Psoas muscle (tissue), 8 donors: ENCODE measurements at regions of chr10 and their contacts with region 1.

Region 1: DNA sequence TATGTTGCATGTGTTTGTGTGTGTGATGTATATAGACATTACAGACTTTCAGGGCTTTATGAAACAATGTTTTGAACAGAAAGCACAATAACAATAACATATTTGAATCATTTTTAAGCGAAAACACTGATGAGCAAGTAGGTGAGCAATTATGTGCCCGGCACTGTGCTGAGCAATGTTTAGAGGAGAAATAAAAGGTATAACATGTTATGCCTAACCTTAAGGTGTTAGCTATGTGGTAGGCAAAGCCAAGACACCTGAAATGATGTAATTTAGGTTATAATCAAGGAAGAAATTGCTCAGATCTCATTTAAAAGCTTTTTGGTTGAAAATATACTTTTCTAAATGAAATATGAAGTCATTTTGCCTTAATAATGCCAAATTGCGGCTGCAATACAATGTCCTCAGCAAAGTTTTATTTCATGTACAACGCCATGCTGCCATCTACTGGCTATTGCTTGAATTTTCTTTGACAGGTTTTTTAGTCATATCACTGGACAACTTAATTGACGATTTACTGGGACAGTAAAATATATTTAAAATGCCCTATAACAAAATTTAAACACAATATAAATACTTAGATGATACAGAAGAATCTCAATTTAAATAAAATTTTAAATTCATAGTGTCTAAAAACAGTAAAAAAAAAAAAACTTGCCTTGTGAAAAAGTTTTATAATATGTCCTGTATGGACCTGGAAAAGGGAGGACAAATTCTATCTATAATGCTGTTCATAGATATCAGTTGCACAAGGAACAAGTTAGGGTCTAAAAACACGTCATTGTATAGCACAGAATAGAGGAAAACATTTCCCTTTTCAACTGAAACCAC is 131.1 kb upstream of the CDK1 start:
- DNase-seq: no peak
- ATAC-seq: peak in 3 of 4 donors; percentile 58 to 86 (median 67)
- H3K4me3 ChIP-seq: no peak overlapping the region
- H3K27ac ChIP-seq: no peak overlapping the region
- H3K4me1 ChIP-seq: no peaks in the 10 kb centered on the region
- H3K27me3 ChIP-seq: no peaks in the 10 kb centered on the region
- CTCF ChIP-seq: peak; percentile 82

Region 2: DNA sequence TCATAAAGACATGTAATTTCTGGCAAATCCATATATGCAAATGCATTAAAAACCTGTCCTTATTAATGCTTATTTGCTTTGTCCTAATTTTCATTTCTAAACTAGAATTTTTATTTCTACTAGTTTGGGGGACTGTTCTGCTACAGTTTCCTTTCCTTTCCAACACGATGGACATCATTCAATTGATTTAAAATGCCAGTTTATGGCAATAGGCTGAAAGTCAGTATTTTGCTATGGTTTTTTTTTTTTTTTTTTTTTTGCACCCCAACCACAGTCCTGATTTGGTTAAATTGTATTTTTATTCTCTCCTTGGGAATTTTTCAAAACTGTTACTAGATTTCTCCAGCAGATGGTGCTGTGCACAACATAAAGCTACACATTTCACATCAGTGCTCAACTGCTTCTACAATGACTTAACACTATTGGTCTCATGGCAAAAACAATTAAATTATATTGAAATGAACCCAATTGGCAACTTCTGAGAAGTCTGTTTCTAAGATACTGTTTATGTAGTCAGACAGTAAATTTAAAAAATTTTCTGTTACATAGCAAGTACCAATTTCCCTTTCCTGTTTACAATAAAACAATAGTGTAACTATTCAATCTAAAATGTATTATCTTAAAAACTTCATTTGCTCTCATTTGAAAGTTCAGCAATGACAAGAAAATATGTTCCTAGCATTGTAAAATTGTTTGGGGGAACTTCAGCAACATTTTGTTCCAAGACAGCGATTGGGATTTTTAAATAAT is 547.0 kb before region 1 on chr10:
- intact Hi-C with region 1: loop called (anchors 5 to 10 kb)
- DNase-seq: no peak
- ATAC-seq: peak; percentile 63 to 90 (median 76)
- H3K4me3 ChIP-seq: no peak overlapping the region
- H3K27ac ChIP-seq: peak overlapping the region; percentile 33
- H3K4me1 ChIP-seq: no peaks in the 10 kb centered on the region
- H3K27me3 ChIP-seq: no peaks in the 10 kb centered on the region
- CTCF ChIP-seq: peak; percentile 70

Region 3: DNA sequence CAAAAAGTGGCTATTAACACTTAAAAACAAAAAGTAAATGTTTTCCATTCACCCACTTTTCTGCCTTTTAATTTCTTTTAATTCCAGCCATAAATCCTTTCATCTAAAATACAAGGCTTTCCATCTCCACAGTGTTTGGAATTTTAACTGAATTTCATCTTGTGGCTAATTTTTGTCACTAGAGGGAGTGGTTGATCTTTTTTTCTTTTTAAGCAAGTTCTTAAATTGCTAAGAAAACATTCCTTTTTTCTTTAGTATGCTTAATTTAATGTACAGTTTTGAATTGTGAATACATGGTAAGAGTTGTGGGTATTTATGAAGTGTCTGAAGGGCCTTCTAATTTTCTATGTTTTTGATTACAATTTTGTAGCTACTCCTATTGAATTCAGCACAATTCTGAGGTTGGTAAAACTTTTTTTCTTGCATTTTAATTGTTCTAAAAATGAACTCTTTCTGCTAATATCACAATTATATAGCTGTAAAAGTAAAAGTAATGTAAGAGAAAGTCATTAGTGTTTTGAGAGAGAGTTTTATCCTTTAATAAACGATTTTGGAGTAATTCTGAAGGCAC is 202.6 kb before region 1 on chr10:
- intact Hi-C with region 1: loop called (anchors 2 kb)
- DNase-seq: no peak
- ATAC-seq: no peak
- H3K4me3 ChIP-seq: no peak overlapping the region
- H3K27ac ChIP-seq: no peak overlapping the region
- H3K4me1 ChIP-seq: peaks cover 18% of the 10 kb centered on the region
- H3K27me3 ChIP-seq: no peaks in the 10 kb centered on the region
- CTCF ChIP-seq: peak; percentile 53

Region 4: DNA sequence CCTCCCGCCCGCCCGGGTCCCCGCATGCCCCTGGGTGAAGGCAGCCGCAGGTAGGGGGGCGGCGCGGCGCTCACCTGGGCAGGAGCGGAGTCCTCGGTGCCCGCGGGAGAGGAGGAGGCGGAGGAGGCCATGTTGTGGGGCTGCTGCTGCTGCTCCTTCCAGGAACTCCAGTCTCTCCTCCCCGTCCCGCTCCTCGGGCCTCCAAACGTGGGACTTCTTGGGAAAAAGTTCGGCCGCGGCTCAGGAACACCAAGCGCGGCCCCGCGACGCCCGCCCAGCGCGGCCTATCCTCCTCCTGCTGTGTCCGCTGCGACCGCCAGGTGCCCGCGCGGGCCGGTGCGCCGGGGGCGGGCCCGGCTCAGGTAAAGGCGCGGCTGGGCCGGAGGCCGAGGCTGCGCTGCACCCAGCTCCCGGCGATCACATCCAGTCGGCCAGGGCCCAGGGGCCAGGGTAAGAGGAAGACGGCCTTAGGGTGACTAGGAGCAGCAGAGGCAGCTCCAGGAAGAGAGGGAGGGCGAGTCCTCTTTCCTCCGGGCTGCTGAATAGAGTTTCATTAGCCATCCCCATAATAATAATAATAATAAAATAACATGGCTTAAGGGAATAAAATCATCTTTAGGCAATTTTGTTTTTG is 86.1 kb after region 1 on chr10:
- intact Hi-C with region 1: no loop called
- DNase-seq: peak; percentile 14 to 46
- ATAC-seq: peak in 3 of 4 donors; percentile 42 to 60 (median 59)
- H3K4me3 ChIP-seq: peak overlapping the region; percentile 69
- H3K27ac ChIP-seq: no peak overlapping the region
- H3K4me1 ChIP-seq: peaks cover 3% of the 10 kb centered on the region
- H3K27me3 ChIP-seq: peaks cover 0 to 41% (median 19%) of the 10 kb centered on the region in 3 donors
- CTCF ChIP-seq: peak; percentile 23

Region 5: DNA sequence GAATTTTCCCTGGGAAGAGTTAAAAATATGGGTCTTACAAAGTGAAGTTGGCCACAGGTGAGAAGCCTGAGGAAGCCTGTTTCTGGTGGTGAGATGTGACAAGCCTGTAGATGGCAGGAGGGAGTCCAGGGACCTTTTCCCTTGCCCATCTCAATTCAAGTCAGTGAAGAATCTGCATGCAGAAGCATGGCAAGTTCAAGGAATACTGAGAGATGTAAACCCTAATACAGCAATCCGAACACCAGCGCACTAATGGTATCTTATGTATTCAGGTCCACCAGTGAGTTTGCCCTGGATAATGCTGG is 223.2 kb after region 1 on chr10:
- intact Hi-C with region 1: no loop called
- DNase-seq: no peak
- ATAC-seq: peak in 1 of 4 donors; percentile 30
- H3K4me3 ChIP-seq: no peak overlapping the region
- H3K27ac ChIP-seq: peak overlapping the region; percentile 85
- H3K4me1 ChIP-seq: peaks cover 71% of the 10 kb centered on the region
- H3K27me3 ChIP-seq: no peaks in the 10 kb centered on the region
- CTCF ChIP-seq: peak; percentile 51